Panc1 (cell line): ENCODE measurements at regions of chr4 and their contacts with region 1.

Region 1: DNA sequence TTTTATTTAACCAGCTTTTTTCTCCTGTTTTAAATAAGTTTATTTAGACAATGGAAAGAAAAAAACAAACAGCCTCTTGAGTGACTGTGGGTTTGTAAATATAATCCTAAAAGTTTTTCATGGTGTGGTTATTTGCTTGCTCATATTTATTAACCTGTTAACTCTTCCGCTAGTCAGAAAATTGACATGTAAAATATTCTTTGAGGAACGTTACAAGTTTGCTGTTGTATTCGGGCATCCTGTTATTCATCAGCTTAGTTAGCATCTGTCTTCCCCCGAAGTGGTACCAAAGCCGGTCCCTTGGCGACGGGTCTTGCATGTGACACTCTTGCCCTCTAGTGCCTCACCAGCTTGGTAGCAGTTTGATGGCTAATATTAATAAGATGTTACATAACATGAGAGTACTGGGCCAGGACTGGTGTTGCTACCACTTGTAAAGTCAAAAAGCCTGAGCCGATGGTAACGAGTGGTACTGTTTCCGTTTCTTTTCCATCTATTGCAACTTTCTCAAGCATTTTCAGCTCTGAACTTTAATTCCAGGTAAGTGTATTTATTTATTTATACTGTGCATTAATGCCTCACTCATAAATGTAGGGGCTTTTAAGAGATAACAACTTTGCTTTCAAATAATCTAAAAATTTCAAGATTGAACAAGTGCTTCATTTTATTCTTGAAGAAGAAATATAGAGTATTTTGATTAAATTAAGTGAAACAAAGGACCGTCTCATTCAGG is at the start of gene NDST3:
- DNase-seq: no peak
- ATAC-seq: peak; percentile 92
- H3K4me3 ChIP-seq: peak within 1 kb of the TSS; percentile 37 to 44
- H3K27ac ChIP-seq: no peak within 1 kb of the TSS
- H3K4me1 ChIP-seq: no peaks in the 10 kb centered on the region
- H3K27me3 ChIP-seq: peaks cover 4% of the 10 kb centered on the region; the same call in 1 of the 2 replicates
- CTCF ChIP-seq: peak; percentile 75
- total RNA-seq, gene NDST3: not detected

Region 2: GRCh38 chr4:117134386-117134785 is 899.8 kb before region 1 on chr4:
- CTCF ChIA-PET with region 1: no interaction called
- POLR2A ChIA-PET with region 1: no interaction called
- in situ Hi-C with region 1: no loop called
- intact Hi-C with region 1: loop called (anchors 10 kb)
- DNase-seq: peak; percentile 25
- ATAC-seq: no peak
- H3K4me3 ChIP-seq: no peak overlapping the region
- H3K27ac ChIP-seq: no peak overlapping the region
- H3K4me1 ChIP-seq: no peaks in the 10 kb centered on the region
- H3K27me3 ChIP-seq: no peaks in the 10 kb centered on the region
- CTCF ChIP-seq: peak; percentile 51; the same call in 1 of the 2 replicates